H1 (cell line): ENCODE measurements at regions of chr2 and their contacts with region 1.

Region 1: DNA sequence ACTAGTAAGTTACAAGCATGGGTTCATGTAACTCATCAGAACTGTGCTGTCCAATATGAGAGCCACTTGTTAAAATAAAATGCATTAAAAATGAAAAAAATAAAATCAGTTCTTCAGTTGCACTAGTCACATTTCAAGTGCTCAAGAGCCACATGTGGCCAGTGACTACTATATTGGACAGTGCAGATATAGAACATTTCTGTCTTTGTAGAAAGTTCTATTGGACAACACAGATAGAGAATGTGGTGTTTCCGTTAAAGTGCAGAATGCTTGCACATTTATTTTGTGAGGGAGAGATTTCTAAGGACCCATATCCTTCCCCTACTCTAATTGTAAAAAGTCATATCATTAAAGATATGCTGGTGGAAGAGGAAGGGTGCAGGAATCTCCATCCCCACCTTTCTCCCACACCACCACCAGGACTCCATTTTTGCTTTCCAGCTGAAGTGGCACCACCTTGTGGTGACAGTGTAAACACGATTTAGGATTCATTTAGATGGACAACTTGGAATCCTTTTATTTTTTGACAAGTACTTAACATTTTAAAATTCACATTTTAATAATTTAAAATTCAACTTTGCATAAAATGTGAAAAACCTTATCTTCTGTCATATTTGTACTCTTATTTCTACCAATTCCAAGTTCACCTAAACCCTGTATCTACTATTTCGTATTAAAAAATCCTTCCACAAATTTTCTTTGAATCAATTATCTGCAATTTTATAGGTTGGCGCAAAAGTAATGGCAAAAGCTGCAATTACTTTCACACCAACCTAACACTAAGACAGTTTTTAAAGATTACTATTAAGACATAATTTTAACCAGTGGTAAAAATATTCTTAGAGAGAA is 9.4 kb upstream of the CD302 start:
- DNase-seq: no peak
- H3K4me3 ChIP-seq: no peak overlapping the region
- H3K27ac ChIP-seq: no peak overlapping the region
- H3K4me1 ChIP-seq: no peaks in the 10 kb centered on the region; a peak in 1 of 7 replicates
- H3K27me3 ChIP-seq: no peaks in the 10 kb centered on the region
- CTCF ChIP-seq: peak; percentile 64 to 96 (median 80)
- EP300 ChIP-seq: no peak
- POLR2A ChIP-seq: no peak
- RAD21 ChIP-seq: peak; percentile 85 to 88

Region 2: DNA sequence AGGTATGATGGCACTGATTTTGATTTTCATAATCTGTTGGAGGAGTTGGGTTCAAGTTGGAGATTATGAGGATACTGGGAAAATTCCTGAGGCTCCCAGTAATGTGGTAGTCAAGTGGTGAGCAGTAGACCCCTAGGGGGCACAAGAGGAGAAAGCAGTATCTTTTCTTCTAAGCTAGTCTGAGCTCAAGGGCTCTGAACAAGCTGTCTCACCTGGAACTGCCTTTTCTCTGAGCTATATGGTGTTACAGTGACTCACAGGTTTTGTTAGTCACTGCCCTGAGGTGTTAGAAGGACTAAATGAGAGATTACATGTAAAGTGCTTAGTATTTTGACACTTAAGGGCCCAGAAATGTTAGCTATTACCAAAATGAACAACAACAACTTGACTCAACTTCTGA is 51.6 kb before region 1 on chr2:
- CTCF ChIA-PET with region 1: interaction called, 27 read pairs
- POLR2A ChIA-PET with region 1: no interaction called
- DNase-seq: peak in 1 of 2 experiments; percentile 25
- H3K4me3 ChIP-seq: no peak overlapping the region
- H3K27ac ChIP-seq: no peak overlapping the region
- H3K4me1 ChIP-seq: no peaks in the 10 kb centered on the region
- H3K27me3 ChIP-seq: no peaks in the 10 kb centered on the region
- CTCF ChIP-seq: peak in 2 of 3 experiments; percentile 66 to 79; a peak in 3 of 4 replicates
- EP300 ChIP-seq: no peak
- POLR2A ChIP-seq: no peak
- RAD21 ChIP-seq: peak; percentile 62 to 70